Heart left ventricle (tissue), 16 donors: ENCODE measurements at regions of chr12 and their contacts with region 1.

Region 1: GRCh38 chr12:108507971-108508642 is 7.0 kb upstream of the FICD start:
- DNase-seq: no peak
- ATAC-seq: no peak
- H3K4me3 ChIP-seq: no peak overlapping the region
- H3K27ac ChIP-seq: no peak overlapping the region
- H3K4me1 ChIP-seq: peaks cover 0 to 7% (median 0%) of the 10 kb centered on the region in 12 donors
- H3K27me3 ChIP-seq: peaks cover 0 to 4% (median 0%) of the 10 kb centered on the region in 9 donors
- CTCF ChIP-seq: no peak
- POLR2A ChIP-seq: no peak

Region 2: GRCh38 chr12:107929436-107929835 is 578.7 kb before region 1 on chr12:
- intact Hi-C with region 1: loop called in 1 of 10 experiments (anchors 10 kb)
- DNase-seq: no peak
- ATAC-seq: no peak
- H3K4me3 ChIP-seq: no peak overlapping the region
- H3K27ac ChIP-seq: no peak overlapping the region
- H3K4me1 ChIP-seq: no peaks in the 10 kb centered on the region
- H3K27me3 ChIP-seq: peaks cover 0 to 35% (median 7%) of the 10 kb centered on the region in 9 donors
- CTCF ChIP-seq: peak in 2 of 12 donors; percentile 11 to 16
- POLR2A ChIP-seq: no peak

Region 3: GRCh38 chr12:108099073-108099472 is 409.0 kb before region 1 on chr12:
- intact Hi-C with region 1: loop called in 1 of 10 experiments (anchors 10 kb)
- DNase-seq: no peak
- ATAC-seq: no peak
- H3K4me3 ChIP-seq: no peak overlapping the region
- H3K27ac ChIP-seq: no peak overlapping the region
- H3K4me1 ChIP-seq: no peaks in the 10 kb centered on the region
- H3K27me3 ChIP-seq: peaks cover 0 to 36% (median 5%) of the 10 kb centered on the region in 9 donors
- CTCF ChIP-seq: peak in 9 of 12 donors; percentile 16 to 46 (median 41)
- POLR2A ChIP-seq: no peak

Region 4: DNA sequence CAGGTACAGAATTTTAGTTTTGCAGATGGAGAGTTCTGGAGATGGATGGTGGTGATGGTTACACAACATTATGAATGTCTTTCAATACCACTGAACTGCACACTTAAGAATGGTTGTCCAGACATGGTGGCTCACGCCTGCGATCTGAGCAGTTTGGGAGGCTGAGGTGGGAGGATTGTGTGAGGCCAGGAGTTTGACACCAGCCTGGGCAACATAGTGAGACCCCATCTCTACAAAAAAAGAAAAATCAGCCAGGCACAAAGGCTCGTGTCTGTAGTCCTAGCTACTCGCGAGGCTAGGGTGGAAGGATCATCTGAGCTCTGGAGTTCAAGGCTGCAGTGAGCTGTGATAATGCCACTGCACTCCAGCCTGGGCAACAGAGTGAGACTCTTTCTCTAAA is 536.1 kb after region 1 on chr12:
- intact Hi-C with region 1: no loop called
- DNase-seq: no peak
- ATAC-seq: no peak
- H3K4me3 ChIP-seq: no peak overlapping the region
- H3K27ac ChIP-seq: no peak overlapping the region
- H3K4me1 ChIP-seq: no peaks in the 10 kb centered on the region
- H3K27me3 ChIP-seq: peaks cover 0 to 6% (median 0%) of the 10 kb centered on the region in 9 donors
- CTCF ChIP-seq: no peak
- POLR2A ChIP-seq: no peak